K562 (cell line): ENCODE measurements at regions of chr3 and their contacts with region 1.

Region 1: DNA sequence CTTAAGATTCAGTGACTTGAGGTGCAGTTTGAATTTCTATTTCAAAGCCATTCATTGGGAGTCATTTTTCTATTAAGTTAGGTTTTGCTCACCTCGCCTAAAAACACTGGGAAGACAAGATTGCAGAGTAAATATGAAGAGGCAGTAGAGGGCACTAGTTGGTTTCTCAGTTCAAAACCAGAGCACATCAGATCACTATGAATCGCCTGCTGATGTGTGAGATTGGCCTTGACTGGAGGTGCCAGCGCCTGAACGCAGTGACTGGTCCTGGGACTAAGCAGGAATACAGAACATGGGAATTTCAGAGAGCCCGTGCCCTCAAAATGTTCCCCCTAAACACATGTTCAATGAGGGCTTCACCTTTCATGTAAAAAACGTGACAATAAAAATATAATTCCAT is 229.0 kb downstream of the ITPR1 start:
- DNase-seq: peak; percentile 51 to 83 (median 66)
- ATAC-seq: peak; percentile 94
- H3K4me3 ChIP-seq: no peak overlapping the region
- H3K27ac ChIP-seq: no peak overlapping the region
- H3K4me1 ChIP-seq: peaks cover 0 to 20% of the 10 kb centered on the region in 2 experiments; a peak in 4 of 5 replicates
- H3K27me3 ChIP-seq: no peaks in the 10 kb centered on the region
- CTCF ChIP-seq: peak; percentile 76 to 84 (median 81)
- EP300 ChIP-seq: peak; percentile 55; the same call in 1 of the 2 replicates
- POLR2A ChIP-seq: no peak
- RAD21 ChIP-seq: peak; percentile 94 to 97

Region 2: GRCh38 chr3:4741404-4742307 is 19.6 kb after region 1 on chr3:
- CTCF ChIA-PET with region 1: no interaction called
- POLR2A ChIA-PET with region 1: interaction called, 3 read pairs
- in situ Hi-C with region 1: no loop called
- intact Hi-C with region 1: loop called (anchors 2 kb)
- DNase-seq: peak; percentile 85 to 95 (median 86)
- ATAC-seq: peak; percentile 78
- H3K4me3 ChIP-seq: no peak overlapping the region
- H3K27ac ChIP-seq: peak overlapping the region; percentile 89
- H3K4me1 ChIP-seq: peaks cover 44 to 75% of the 10 kb centered on the region in 2 experiments
- H3K27me3 ChIP-seq: no peaks in the 10 kb centered on the region
- CTCF ChIP-seq: peak in 1 of 3 experiments; percentile 17; a peak in 1 of 6 replicates
- EP300 ChIP-seq: peak; percentile 94
- POLR2A ChIP-seq: peak; percentile 73
- RAD21 ChIP-seq: peak in 1 of 2 experiments; percentile 17; a peak in 1 of 4 replicates

Region 3: GRCh38 chr3:4814305-4814903 is 92.3 kb after region 1 on chr3:
- CTCF ChIA-PET with region 1: no interaction called
- POLR2A ChIA-PET with region 1: no interaction called
- in situ Hi-C with region 1: loop called (anchors 5 kb)
- intact Hi-C with region 1: loop called (anchors 1 kb)
- DNase-seq: peak; percentile 96 to 99 (median 98)
- ATAC-seq: peak; percentile 93
- H3K4me3 ChIP-seq: peak overlapping the region; percentile 39
- H3K27ac ChIP-seq: peak overlapping the region; percentile 93
- H3K4me1 ChIP-seq: peaks cover 16 to 67% of the 10 kb centered on the region in 2 experiments
- H3K27me3 ChIP-seq: no peaks in the 10 kb centered on the region
- CTCF ChIP-seq: no peak
- EP300 ChIP-seq: peak; percentile 96
- POLR2A ChIP-seq: peak; percentile 84
- RAD21 ChIP-seq: peak in 1 of 2 experiments; percentile 19; a peak in 2 of 4 replicates

Region 4: DNA sequence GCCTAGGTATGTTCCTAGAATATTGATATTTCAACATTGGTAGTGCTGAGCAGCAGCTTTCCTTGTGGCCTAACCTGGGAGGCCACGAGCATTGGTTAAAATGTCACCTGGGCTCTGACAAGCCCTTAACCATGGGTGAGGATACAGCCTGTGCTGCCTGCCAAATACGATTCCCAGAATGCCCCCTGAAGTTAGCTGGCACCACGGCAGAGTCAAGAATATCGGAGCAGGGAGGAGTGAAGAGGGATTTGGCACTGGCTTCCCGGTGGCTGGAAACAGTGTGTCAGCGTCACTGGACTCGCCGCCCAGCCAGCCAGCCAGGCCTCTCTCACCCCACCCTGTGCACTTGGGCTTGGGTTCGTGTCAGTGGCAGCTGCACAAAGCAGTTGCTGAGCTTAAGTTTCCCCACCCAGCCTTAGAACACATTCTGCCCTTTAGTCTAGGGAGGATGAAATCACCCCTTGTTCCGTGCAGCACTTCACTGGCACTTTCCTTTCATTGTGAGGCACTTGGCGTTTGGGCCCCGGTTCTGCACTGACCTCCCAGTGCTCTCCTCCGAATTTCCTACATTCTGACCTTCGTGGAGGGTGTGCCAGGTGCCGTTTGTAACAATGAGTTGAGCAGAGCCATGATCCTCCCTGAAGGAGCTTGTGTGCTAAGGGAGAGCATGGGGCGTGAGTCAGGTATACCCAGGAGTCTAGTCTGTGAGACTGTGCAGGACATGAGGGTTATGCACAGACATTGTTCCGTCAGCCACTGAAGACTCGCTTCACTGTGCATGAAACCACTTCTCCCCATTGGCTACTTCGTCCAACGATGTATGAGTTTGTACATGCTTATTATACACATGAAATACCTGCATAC is 104.4 kb after region 1 on chr3:
- CTCF ChIA-PET with region 1: no interaction called
- POLR2A ChIA-PET with region 1: interaction called, 3 read pairs
- in situ Hi-C with region 1: no loop called
- intact Hi-C with region 1: loop called (anchors 5 kb)
- DNase-seq: no peak
- ATAC-seq: no peak
- H3K4me3 ChIP-seq: no peak overlapping the region
- H3K27ac ChIP-seq: peak overlapping the region; percentile 16
- H3K4me1 ChIP-seq: peaks cover 45 to 89% of the 10 kb centered on the region in 2 experiments
- H3K27me3 ChIP-seq: no peaks in the 10 kb centered on the region
- CTCF ChIP-seq: no peak
- EP300 ChIP-seq: no peak
- POLR2A ChIP-seq: no peak; the same call in 1 of the 2 replicates
- RAD21 ChIP-seq: no peak

Region 5: GRCh38 chr3:4888913-4889846 is 167.1 kb after region 1 on chr3:
- CTCF ChIA-PET with region 1: no interaction called
- POLR2A ChIA-PET with region 1: no interaction called
- in situ Hi-C with region 1: no loop called
- intact Hi-C with region 1: loop called (anchors 5 kb)
- DNase-seq: no peak
- ATAC-seq: no peak
- H3K4me3 ChIP-seq: no peak overlapping the region
- H3K27ac ChIP-seq: no peak overlapping the region
- H3K4me1 ChIP-seq: peaks cover 0 to 16% of the 10 kb centered on the region in 2 experiments; a peak in 3 of 5 replicates
- H3K27me3 ChIP-seq: no peaks in the 10 kb centered on the region
- CTCF ChIP-seq: no peak
- EP300 ChIP-seq: no peak
- POLR2A ChIP-seq: no peak
- RAD21 ChIP-seq: peak in 1 of 2 experiments; percentile 26; a peak in 1 of 4 replicates

Region 6: GRCh38 chr3:4904811-4905695 is 182.9 kb after region 1 on chr3:
- CTCF ChIA-PET with region 1: no interaction called
- POLR2A ChIA-PET with region 1: no interaction called
- in situ Hi-C with region 1: no loop called
- intact Hi-C with region 1: loop called (anchors 5 kb)
- DNase-seq: peak in 1 of 4 experiments; percentile 25
- ATAC-seq: no peak
- H3K4me3 ChIP-seq: no peak overlapping the region
- H3K27ac ChIP-seq: no peak overlapping the region
- H3K4me1 ChIP-seq: peaks cover 0 to 31% of the 10 kb centered on the region in 2 experiments; a peak in 4 of 5 replicates
- H3K27me3 ChIP-seq: no peaks in the 10 kb centered on the region
- CTCF ChIP-seq: no peak
- EP300 ChIP-seq: 0 out of 2 replicates have a peak, but pooled peaks have one; percentile 2
- POLR2A ChIP-seq: no peak
- RAD21 ChIP-seq: no peak

Region 7: DNA sequence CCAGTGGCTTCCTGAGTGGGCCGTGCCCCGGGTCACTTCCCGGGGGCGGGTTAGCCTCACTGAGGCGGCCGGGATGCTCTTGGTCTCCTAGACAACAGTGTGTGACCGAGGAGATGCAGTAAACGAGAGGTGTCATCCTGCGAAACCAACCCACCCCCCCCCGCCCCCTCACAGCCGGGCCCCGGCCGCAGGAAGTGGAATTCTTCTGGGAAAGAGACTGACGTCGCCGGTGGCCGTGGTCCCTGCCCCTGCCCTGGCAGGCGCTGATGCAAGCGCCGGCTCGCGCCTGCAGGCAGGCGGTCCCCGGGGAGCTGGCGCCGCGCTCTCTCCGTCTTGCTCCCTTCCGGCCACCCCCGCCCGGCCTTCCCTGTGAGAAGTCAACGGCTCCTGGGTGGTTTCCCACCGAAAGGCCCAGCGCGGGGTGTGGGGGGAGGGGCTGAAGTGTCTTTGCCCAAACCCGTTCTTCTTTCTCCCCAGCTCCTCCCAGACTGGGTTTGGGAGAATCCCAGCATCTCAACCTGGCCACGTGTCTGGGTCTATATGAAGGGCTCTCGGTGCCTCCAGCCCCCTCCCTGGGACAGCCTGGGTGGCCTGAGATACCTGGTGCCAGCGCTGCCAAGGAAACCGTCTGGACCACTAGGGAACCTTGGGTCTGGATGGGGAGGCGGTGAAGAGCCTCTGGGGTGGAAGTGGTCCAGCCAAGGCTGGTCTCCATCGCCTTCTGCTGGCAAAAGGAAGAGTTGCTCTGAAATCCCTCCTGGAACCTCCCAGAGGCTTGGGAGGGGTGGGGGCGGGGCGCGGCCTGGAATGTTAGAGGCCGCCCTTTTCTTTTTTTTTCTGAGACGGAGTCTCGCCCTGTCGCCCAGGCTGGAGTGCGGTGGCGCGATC is 304.5 kb after region 1 on chr3:
- CTCF ChIA-PET with region 1: no interaction called
- POLR2A ChIA-PET with region 1: no interaction called
- in situ Hi-C with region 1: no loop called
- intact Hi-C with region 1: loop called (anchors 1 kb)
- DNase-seq: peak; percentile 62 to 83 (median 69)
- ATAC-seq: peak; percentile 84
- H3K4me3 ChIP-seq: no peak overlapping the region
- H3K27ac ChIP-seq: no peak overlapping the region
- H3K4me1 ChIP-seq: peaks cover 22 to 27% of the 10 kb centered on the region in 2 experiments
- H3K27me3 ChIP-seq: no peaks in the 10 kb centered on the region
- CTCF ChIP-seq: peak; percentile 52 to 79 (median 78); a peak in 5 of 6 replicates
- EP300 ChIP-seq: 0 out of 2 replicates have a peak, but pooled peaks have one; percentile 17
- POLR2A ChIP-seq: no peak
- RAD21 ChIP-seq: peak; percentile 31 to 84; a peak in 3 of 4 replicates